Heart right ventricle (tissue), 16 donors: ENCODE measurements at regions of chr15 and their contacts with region 1.

Region 1: DNA sequence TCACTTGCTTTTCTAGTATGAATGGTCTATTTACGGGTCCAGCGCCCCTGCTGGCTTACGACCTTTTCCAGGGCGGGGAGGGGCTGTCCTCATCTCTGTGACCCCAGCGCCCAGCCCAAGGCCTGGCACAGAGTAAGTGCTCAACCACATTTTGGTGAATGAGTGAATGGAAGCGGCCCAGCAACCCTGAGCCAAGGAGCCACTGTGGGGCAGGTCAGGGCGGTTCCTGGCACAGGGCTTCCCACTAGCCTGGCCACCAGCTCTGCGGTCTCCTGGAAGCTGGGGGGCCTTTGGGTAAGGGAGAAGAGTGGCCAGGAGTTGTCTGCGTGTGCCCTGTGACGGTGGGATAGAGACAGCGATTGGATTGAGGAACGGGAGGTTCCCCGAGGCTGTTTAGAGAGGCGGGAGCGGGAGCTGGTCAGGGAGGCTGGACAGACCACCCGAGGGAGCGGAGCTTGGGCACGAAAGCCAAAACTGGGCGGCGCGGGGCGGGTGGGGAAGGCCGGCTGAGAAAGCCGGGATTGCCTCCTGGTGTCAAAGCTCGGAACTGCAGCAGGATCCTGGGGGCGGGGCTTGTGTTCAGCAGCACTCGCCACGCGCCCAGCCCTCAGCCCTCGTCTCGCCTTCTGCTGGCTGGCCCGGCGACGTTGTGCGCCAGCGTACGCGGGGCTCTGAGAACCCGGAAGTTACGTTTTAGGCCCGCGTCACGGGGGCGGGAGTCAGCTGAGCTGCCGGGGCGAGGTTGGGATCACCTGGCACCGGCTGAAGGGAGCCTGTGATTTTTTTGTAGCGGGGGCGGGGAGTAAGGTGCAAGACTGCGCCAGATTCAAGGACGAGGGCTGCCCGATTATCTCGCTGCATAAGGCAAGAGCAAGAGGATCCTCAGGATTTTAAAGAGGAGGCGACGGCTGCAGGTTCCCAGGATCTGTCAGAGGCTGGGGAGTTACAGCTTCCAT is at the start of gene VPS18:
- DNase-seq: peak; percentile 98 to 99
- ATAC-seq: peak; percentile 97 to 99 (median 99)
- H3K4me3 ChIP-seq: peak within 1 kb of the TSS; percentile 57 to 99 (median 90)
- H3K27ac ChIP-seq: peak within 1 kb of the TSS; percentile 69 to 95 (median 86)
- H3K4me1 ChIP-seq: peaks cover 0 to 30% (median 20%) of the 10 kb centered on the region in 9 donors
- H3K27me3 ChIP-seq: no peaks in the 10 kb centered on the region
- CTCF ChIP-seq: peak; percentile 96 to 99 (median 99)
- total RNA-seq, gene VPS18: 16.0 to 25.0 (median 21.5) TPM

Region 2: DNA sequence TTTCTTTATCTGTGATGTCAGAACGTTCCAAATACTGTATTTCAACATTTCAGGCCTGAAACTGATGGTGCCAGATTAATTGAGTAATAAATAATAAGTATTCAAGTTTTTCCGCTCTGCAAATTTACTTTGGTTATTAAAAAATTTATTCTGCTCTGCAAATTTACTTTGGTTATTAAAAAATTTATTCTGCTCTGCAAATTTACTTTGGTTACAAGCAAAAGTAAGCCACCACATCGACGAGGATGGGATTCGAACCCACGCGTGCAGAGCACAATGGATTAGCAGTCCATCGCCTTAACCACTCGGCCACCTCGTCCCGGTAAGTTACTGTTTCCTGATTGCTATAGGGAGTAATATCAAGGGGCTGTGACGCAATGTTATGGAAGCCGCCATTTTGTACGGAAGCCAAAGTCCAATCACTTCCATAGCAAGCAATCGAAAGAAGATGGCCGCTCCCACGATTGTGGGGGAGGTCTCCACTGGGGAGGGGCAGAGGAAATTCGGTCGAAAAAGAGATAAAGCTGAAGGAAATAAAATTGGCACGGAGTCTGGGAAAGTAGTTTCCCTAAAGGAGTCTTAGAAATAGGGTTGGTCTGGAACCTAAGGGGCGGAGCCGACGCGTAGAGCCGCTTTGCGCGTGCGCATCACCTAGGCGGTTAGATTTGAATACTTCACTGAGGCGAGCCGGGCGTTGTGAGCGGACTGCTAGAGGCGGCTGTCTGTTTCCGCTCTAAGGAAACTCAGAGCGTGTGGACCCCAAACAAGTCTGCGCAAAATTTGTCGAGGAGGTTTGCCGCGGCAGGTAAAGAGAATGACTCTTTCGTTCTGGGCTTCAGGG is 300.2 kb before region 1 on chr15 and contains the start of gene KNL1:
- intact Hi-C with region 1: loop called in 5 of 10 experiments (anchors 5 to 10 kb)
- DNase-seq: peak; percentile 85 to 95
- ATAC-seq: peak; percentile 94 to 97 (median 96)
- H3K4me3 ChIP-seq: peak within 1 kb of the TSS; percentile 41 to 88 (median 62)
- H3K27ac ChIP-seq: peak within 1 kb of the TSS; percentile 55 to 97 (median 89)
- H3K4me1 ChIP-seq: peaks cover 0 to 33% (median 12%) of the 10 kb centered on the region in 9 donors
- H3K27me3 ChIP-seq: no peaks in the 10 kb centered on the region
- CTCF ChIP-seq: peak in 1 of 9 donors; percentile 18
- total RNA-seq, gene KNL1: 0.21 to 2.6 (median 0.73) TPM

Region 3: GRCh38 chr15:40694688-40695468 is 199.1 kb before region 1 on chr15 and contains the start of gene RAD51:
- intact Hi-C with region 1: loop called in 2 of 10 experiments (anchors 5 to 10 kb)
- DNase-seq: peak; percentile 94
- ATAC-seq: peak; percentile 98 to 99 (median 99)
- H3K4me3 ChIP-seq: peak within 1 kb of the TSS; percentile 52 to 90 (median 84)
- H3K27ac ChIP-seq: peak within 1 kb of the TSS; percentile 94 to 100 (median 98)
- H3K4me1 ChIP-seq: peaks cover 0 to 24% (median 18%) of the 10 kb centered on the region in 9 donors
- H3K27me3 ChIP-seq: no peaks in the 10 kb centered on the region
- CTCF ChIP-seq: peak in 1 of 9 donors; percentile 18
- total RNA-seq, gene RAD51: 0.30 to 3.6 (median 0.76) TPM

Region 4: GRCh38 chr15:40807028-40807887 is 86.8 kb before region 1 on chr15 and contains the starts of genes DNAJC17 and ZFYVE19:
- intact Hi-C with region 1: loop called in 1 of 10 experiments (anchors 10 kb)
- DNase-seq: peak; percentile 95 to 99
- ATAC-seq: peak; percentile 99
- H3K4me3 ChIP-seq: peak within 1 kb of the TSS; percentile 70 to 96 (median 88)
- H3K27ac ChIP-seq: peak within 1 kb of the TSS; percentile 80 to 99 (median 96)
- H3K4me1 ChIP-seq: peaks cover 3 to 56% (median 26%) of the 10 kb centered on the region in 9 donors
- H3K27me3 ChIP-seq: no peaks in the 10 kb centered on the region
- CTCF ChIP-seq: peak in 3 of 9 donors; percentile 18 to 31 (median 21)
- total RNA-seq, gene DNAJC17: 9.9 to 17.7 (median 14.7) TPM
- total RNA-seq, gene ZFYVE19: 14.2 to 29.2 (median 18.2) TPM

Region 5: GRCh38 chr15:41116116-41116871 is 222.3 kb after region 1 on chr15 and contains the start of gene INO80:
- intact Hi-C with region 1: loop called in 1 of 10 experiments (anchors 5 kb)
- DNase-seq: peak; percentile 96 to 99
- ATAC-seq: peak; percentile 95 to 98 (median 97)
- H3K4me3 ChIP-seq: peak within 1 kb of the TSS; percentile 43 to 97 (median 82)
- H3K27ac ChIP-seq: peak within 1 kb of the TSS; percentile 96 to 100 (median 100)
- H3K4me1 ChIP-seq: peaks cover 0 to 38% (median 21%) of the 10 kb centered on the region in 9 donors
- H3K27me3 ChIP-seq: peaks cover 0 to under 1% (median 0%) of the 10 kb centered on the region in 7 donors
- CTCF ChIP-seq: peak in 1 of 9 donors; percentile 17
- total RNA-seq, gene INO80: 10.0 to 14.8 (median 12.2) TPM